HEK293T (cell line): ENCODE measurements at regions of chr5 and their contacts with region 1.

Region 1: DNA sequence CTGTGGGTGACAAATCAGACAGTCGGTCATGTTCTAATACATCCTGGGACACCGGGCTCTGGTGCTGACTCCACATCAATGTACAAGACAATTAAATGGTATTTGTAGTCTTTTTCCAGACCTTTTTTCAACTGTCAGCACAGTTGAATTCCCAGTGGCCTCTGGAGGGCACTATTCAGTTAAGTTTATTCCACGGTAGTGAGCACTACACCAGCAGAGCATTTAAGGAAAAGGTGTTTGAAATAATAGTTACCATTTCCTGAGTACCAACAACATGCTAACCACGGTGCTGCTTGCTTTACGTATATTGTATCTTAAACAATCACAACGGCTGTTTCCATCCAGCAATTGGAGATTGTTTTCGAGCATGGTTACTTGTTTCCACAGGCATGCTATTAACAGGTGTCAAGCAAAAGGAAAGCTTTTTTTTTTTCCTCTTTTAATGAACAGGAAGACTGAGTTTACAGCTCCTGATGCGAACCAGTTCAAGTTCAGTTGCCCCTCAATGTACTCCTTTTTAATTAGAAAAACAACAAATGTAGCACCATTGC is 186.7 kb downstream of the PDZD2 start:
- DNase-seq: peak; percentile 57

Region 2: GRCh38 chr5:31741496-31741895 is 84.1 kb before region 1 on chr5:
- CTCF ChIA-PET with region 1: no interaction called
- POLR2A ChIA-PET with region 1: no interaction called
- DNase-seq: no peak

Region 3: DNA sequence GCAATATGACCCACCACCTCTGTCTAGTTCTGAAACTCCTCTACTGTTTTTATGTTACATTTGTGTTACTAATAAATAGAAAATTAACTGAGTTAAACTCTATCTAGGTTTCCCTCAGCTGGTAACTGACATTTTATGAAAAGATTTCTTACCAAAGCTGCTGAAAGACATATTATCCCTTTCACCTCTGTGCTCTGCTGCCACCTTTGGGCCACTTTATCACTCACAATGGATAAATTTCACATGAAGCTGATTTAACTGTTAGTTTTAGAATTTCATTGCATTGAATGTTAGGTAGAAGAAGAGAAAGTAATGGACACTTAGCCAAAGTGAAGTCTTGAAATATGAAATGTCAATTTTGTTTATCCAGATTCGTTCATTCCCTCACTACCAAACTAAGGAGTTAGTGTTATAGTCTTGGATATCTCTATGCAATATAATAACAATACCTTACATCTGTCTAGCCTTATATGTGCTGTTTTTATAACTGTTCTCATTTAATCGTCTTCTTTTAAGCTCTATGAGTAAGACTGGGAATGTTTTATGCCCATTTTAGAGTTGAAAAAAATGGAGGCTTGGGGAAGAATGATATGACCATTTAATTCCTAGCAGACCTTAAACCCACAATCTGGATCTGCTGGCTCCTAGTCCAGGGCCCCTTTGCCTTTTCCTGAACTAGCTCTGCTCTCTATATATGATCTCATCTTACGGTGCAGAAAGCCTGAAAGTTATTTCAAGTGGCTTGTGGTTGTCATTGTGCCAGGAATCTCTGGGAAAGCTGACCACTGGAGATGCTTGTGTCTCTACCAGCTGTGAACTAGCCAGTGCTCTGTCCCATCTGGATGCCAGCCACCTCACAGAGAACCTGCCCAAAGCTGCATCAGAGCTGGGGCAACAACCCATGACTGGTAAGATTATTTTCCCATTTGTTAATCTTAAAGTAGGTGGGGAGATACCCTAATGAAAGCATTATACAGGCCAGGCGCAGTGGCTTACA is 251.4 kb after region 1 on chr5:
- CTCF ChIA-PET with region 1: interaction called, 28 read pairs
- POLR2A ChIA-PET with region 1: no interaction called
- DNase-seq: peak; percentile 42

Region 4: DNA sequence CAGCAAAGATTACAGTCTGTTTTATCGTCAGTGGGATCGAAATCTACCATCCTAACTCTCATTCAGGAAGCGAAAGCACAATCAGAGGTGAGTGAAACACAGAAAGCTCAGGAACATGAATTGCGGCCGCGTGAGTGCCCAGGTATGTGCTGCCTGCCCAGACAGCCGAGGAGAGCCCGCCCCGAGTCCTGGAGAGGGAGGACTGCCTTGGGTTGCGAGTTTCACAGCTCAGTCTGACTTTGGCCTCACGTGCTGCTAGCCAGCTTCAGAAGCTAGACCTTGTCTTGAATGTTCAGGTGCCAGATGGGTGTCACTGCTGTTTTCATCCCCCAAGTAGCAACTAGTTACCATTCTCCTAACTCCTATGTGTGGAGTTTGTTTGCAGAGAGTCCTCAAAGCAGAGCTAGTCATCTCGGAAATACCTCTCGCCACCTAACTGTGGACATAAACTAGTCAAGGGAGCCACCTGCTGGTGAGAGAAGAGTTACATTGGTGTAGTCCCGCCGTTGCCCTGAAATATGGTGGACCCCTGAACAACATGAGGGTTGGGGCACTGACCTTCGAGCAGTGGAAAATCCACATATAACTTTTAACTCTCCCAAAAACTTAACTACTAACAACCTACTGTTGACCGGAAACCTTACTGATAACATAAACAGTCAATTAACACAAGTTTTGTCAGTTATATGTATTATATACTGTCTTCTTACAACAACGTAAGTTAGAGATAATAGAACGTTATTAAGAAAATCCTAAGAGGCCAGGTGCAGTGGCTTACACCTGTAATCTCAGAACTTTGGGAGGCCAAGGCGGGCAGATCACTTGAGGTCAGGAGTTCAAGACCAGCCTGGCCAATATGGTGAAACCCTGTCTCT is 267.6 kb after region 1 on chr5:
- CTCF ChIA-PET with region 1: interaction called, 21 read pairs
- POLR2A ChIA-PET with region 1: no interaction called
- DNase-seq: peak; percentile 80